ENCODE measurements at regions of chr9 and their contacts with region 1.

Region 1: GRCh38 chr9:5437254-5438216 is at the start of gene PLGRKT:
- DNase-seq: peak; percentile 91
- H3K4me3 ChIP-seq: peak within 1 kb of the TSS; percentile 55 to 87 (median 75)
- H3K27ac ChIP-seq: peak within 1 kb of the TSS; percentile 95 to 97 (median 96)
- H3K4me1 ChIP-seq: peaks cover 7 to 26% (median 15%) of the 10 kb centered on the region in 3 donors
- H3K27me3 ChIP-seq: no peaks in the 10 kb centered on the region
- CTCF ChIP-seq: peak in 3 of 6 experiments; percentile 12 to 30 (median 29)
- POLR2A ChIP-seq: peak in 3 of 4 donors; percentile 84 to 94 (median 90)
- total RNA-seq, gene PLGRKT: 13.4 to 25.6 (median 20.0) TPM

Region 2: GRCh38 chr9:4740638-4741364 is 696.7 kb before region 1 on chr9 and contains the start of gene AK3:
- intact Hi-C with region 1: loop called (anchors 10 kb)
- DNase-seq: peak; percentile 43
- H3K4me3 ChIP-seq: peak within 1 kb of the TSS; percentile 82 to 97 (median 90)
- H3K27ac ChIP-seq: peak within 1 kb of the TSS; percentile 92 to 99 (median 98)
- H3K4me1 ChIP-seq: peaks cover 9 to 64% (median 11%) of the 10 kb centered on the region in 3 donors
- H3K27me3 ChIP-seq: no peaks in the 10 kb centered on the region
- CTCF ChIP-seq: peak in 3 of 6 experiments; percentile 7 to 21 (median 12)
- POLR2A ChIP-seq: peak in 2 of 4 donors; percentile 91 to 94
- total RNA-seq, gene AK3: 47.8 to 104 (median 81.2) TPM

Region 3: GRCh38 chr9:4994166-4994890 is 443.2 kb before region 1 on chr9:
- intact Hi-C with region 1: loop called (anchors 10 kb)
- DNase-seq: no peak
- H3K4me3 ChIP-seq: no peak overlapping the region
- H3K27ac ChIP-seq: no peak overlapping the region
- H3K4me1 ChIP-seq: peaks cover 0 to 35% (median 0%) of the 10 kb centered on the region in 3 donors
- H3K27me3 ChIP-seq: no peaks in the 10 kb centered on the region
- CTCF ChIP-seq: no peak
- POLR2A ChIP-seq: no peak

Measured in esophagus squamous epithelium (tissue), 5 donors.